ENCODE measurements at regions of chr15 and their contacts with region 1.

Region 1: GRCh38 chr15:68730471-68730919 is 90.2 kb downstream of the ANP32A start:
- DNase-seq: no peak
- ATAC-seq: no peak
- H3K4me3 Mint-ChIP-seq: no peak overlapping the region
- H3K27ac Mint-ChIP-seq: no peak overlapping the region
- H3K4me1 Mint-ChIP-seq: peaks cover 21% of the 10 kb centered on the region
- H3K27me3 Mint-ChIP-seq: peaks cover 2% of the 10 kb centered on the region
- CTCF ChIP-seq: no peak

Region 2: GRCh38 chr15:68795298-68795848 is 64.9 kb after region 1 on chr15:
- CTCF ChIA-PET with region 1: interaction called, 3 read pairs
- POLR2A ChIA-PET with region 1: interaction called, 13 read pairs
- intact Hi-C with region 1: no loop called
- DNase-seq: peak; percentile 55
- ATAC-seq: peak; percentile 62
- H3K4me3 Mint-ChIP-seq: peak overlapping the region; percentile 75
- H3K27ac Mint-ChIP-seq: peak overlapping the region; percentile 85
- H3K4me1 Mint-ChIP-seq: peaks cover 97% of the 10 kb centered on the region
- H3K27me3 Mint-ChIP-seq: no peaks in the 10 kb centered on the region
- CTCF ChIP-seq: no peak

Region 3: GRCh38 chr15:68829068-68829467 is 98.6 kb after region 1 on chr15:
- CTCF ChIA-PET with region 1: interaction called, 3 read pairs
- POLR2A ChIA-PET with region 1: no interaction called
- intact Hi-C with region 1: loop called (anchors 1 kb)
- DNase-seq: no peak
- ATAC-seq: peak; percentile 84
- H3K4me3 Mint-ChIP-seq: no peak overlapping the region
- H3K27ac Mint-ChIP-seq: no peak overlapping the region
- H3K4me1 Mint-ChIP-seq: peaks cover 3% of the 10 kb centered on the region
- H3K27me3 Mint-ChIP-seq: peaks cover 4% of the 10 kb centered on the region
- CTCF ChIP-seq: no peak

Region 4: DNA sequence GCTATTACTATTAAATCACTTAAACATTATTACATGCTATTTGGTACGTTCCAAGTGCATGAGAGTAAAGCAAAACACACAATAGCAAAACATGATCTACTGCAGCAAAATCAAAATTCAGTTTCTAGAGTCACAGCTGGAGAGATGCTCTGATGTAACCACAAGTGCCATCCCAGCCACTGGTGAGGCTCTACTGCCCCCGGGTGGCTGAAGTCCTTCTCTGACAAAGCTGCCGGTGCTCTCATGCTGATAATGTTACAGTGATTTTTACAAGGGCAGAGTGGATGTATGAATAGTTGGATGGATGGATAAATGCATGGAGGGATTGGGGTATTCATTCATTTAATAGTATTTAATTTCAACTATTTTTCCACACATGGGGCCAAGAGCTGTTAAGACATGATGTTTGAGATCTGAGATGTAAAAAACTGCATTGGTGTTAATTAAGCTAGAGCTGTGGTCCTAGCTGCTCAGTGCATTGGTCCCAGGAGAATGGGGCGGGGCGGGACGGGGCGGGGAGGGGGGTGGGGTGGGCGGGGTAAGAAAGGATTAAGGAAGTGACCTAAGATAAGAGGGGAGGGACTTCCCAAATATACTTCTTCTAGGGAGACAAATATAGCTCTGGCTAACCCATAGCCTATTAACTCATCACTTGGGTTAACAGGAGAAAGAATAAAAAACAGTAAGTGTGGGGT is 194.5 kb after region 1 on chr15:
- CTCF ChIA-PET with region 1: no interaction called
- POLR2A ChIA-PET with region 1: no interaction called
- intact Hi-C with region 1: loop called (anchors 1 kb)
- DNase-seq: peak; percentile 32
- ATAC-seq: peak; percentile 69
- H3K4me3 Mint-ChIP-seq: no peak overlapping the region
- H3K27ac Mint-ChIP-seq: no peak overlapping the region
- H3K4me1 Mint-ChIP-seq: peaks cover 2% of the 10 kb centered on the region
- H3K27me3 Mint-ChIP-seq: peaks cover 8% of the 10 kb centered on the region
- CTCF ChIP-seq: no peak

Measured in activated B cell treated with CpG ODN at 0.5 μM for 24 hours (primary cell).